ENCODE measurements at regions of chr1 and their contacts with region 1.

Region 1: GRCh38 chr1:22794647-22795365 is 84.2 kb downstream of the EPHB2 start:
- DNase-seq: no peak
- H3K4me3 ChIP-seq: no peak overlapping the region
- H3K4me3 Mint-ChIP-seq: no peak overlapping the region
- H3K27ac Mint-ChIP-seq: no peak overlapping the region
- H3K4me1 ChIP-seq: peaks cover 16% of the 10 kb centered on the region; the same call in 1 of the 2 replicates
- H3K4me1 Mint-ChIP-seq: peaks cover 18% of the 10 kb centered on the region
- H3K27me3 ChIP-seq: no peaks in the 10 kb centered on the region
- H3K27me3 Mint-ChIP-seq: no peaks in the 10 kb centered on the region
- CTCF ChIP-seq: no peak

Region 2: DNA sequence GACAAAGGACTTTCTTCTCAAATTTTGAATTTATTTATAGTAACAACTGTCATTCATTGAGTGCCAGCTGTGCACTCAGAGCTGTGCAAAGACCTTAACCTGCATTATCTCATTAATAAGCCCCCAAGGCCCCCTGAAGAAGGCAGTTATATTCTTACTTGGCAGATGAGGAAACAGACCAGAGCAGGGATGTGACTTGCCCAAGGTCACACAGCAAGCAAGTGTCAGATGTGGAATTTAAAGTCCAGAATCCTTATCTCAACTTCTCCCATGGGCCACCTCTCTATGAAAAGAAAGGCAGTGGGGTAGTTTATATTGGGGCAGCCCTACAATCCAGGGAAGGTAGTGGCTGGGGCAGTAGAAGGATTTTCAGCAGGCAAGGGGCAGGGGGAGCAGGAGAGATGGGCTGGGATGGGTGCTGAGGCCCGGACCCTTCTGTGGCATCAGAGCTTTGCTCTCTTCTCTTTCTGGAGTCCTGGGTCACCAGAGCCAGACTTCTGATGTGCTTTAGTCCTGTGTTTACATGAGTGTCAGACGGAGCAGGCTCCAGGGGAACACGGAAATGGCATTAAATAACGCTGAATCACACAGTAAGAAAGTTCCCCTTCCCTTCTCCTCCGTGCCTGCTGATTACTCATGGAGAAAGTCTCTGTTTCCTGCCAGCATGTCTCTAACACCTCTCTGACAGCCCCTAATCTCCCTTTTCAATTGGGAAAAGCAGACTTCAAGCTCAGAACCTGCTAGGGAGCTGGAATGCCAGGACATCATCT is 44.7 kb before region 1 on chr1:
- CTCF ChIA-PET with region 1: no interaction called
- POLR2A ChIA-PET with region 1: no interaction called
- intact Hi-C with region 1: loop called (anchors 1 kb)
- DNase-seq: peak in 1 of 2 experiments; percentile 45
- H3K4me3 ChIP-seq: no peak overlapping the region
- H3K4me3 Mint-ChIP-seq: no peak overlapping the region
- H3K27ac Mint-ChIP-seq: peak overlapping the region; percentile 59
- H3K4me1 ChIP-seq: peaks cover 7% of the 10 kb centered on the region
- H3K4me1 Mint-ChIP-seq: peaks cover 17% of the 10 kb centered on the region
- H3K27me3 ChIP-seq: no peaks in the 10 kb centered on the region
- H3K27me3 Mint-ChIP-seq: no peaks in the 10 kb centered on the region
- CTCF ChIP-seq: no peak

Region 3: GRCh38 chr1:22861764-22862440 is 67.1 kb after region 1 on chr1:
- CTCF ChIA-PET with region 1: interaction called, 7 read pairs
- POLR2A ChIA-PET with region 1: no interaction called
- intact Hi-C with region 1: loop called (anchors 1 kb)
- DNase-seq: peak; percentile 42 to 48
- H3K4me3 ChIP-seq: no peak overlapping the region
- H3K4me3 Mint-ChIP-seq: no peak overlapping the region
- H3K27ac Mint-ChIP-seq: no peak overlapping the region
- H3K4me1 ChIP-seq: no peaks in the 10 kb centered on the region
- H3K4me1 Mint-ChIP-seq: no peaks in the 10 kb centered on the region
- H3K27me3 ChIP-seq: no peaks in the 10 kb centered on the region
- H3K27me3 Mint-ChIP-seq: no peaks in the 10 kb centered on the region
- CTCF ChIP-seq: peak; percentile 74 to 79

Region 4: GRCh38 chr1:23237508-23237907 is 442.7 kb after region 1 on chr1:
- CTCF ChIA-PET with region 1: no interaction called
- POLR2A ChIA-PET with region 1: no interaction called
- intact Hi-C with region 1: no loop called
- DNase-seq: no peak
- H3K4me3 ChIP-seq: no peak overlapping the region
- H3K4me3 Mint-ChIP-seq: no peak overlapping the region
- H3K27ac Mint-ChIP-seq: no peak overlapping the region
- H3K4me1 ChIP-seq: no peaks in the 10 kb centered on the region
- H3K4me1 Mint-ChIP-seq: no peaks in the 10 kb centered on the region
- H3K27me3 ChIP-seq: no peaks in the 10 kb centered on the region
- H3K27me3 Mint-ChIP-seq: no peaks in the 10 kb centered on the region
- CTCF ChIP-seq: no peak

Measured in Caco-2 (cell line).